Ascending aorta (tissue), 2 donors: ENCODE measurements at regions of chr2 and their contacts with region 1.

Region 1: DNA sequence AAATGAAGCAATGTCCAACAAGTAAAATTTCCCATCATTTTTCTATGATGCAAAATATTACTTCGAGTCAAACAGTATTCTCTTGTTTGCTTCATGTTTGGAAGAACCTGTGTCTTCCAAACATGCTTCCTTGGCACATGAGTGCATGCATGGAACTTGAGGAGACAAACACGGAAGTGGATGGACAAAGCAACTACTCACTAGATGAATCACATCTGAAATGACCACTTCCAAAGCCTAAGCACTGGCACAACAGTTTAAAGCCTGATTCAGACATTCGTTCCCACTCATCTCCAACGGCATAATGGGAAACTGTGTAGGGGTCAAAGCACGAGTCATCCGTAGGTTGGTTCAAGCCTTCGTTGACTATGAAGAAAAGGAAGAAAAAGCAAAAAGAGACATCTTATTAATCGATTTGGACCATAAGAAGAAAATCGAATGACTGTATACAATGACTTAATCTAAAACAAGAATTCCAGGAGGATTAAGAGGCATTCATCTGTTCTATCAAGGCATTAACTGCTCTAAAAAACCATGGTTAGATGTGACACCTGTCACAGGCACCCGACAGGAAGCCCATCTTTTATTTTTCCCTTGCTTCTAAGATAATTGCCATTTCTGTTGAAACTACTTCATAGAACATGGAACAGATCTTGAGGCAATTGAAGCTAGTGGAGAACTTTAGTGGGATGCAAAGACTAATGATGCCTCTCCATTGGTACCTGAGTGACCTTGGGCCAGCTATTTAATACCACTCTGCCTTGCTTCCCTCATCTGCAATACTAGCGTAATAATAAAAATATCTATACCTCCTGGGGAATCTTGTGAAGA is 56.0 kb downstream of the ATIC start:
- DNase-seq: no peak
- H3K4me3 ChIP-seq: no peak overlapping the region
- H3K27ac ChIP-seq: no peak overlapping the region
- H3K4me1 ChIP-seq: no peaks in the 10 kb centered on the region
- H3K27me3 ChIP-seq: no peaks in the 10 kb centered on the region
- CTCF ChIP-seq: no peak

Region 2: GRCh38 chr2:214987261-214987660 is 380.6 kb before region 1 on chr2:
- intact Hi-C with region 1: no loop called
- DNase-seq: no peak
- H3K4me3 ChIP-seq: no peak overlapping the region
- H3K27ac ChIP-seq: no peak overlapping the region
- H3K4me1 ChIP-seq: no peaks in the 10 kb centered on the region
- H3K27me3 ChIP-seq: no peaks in the 10 kb centered on the region
- CTCF ChIP-seq: no peak

Region 3: GRCh38 chr2:215120401-215120800 is 247.5 kb before region 1 on chr2:
- intact Hi-C with region 1: no loop called
- DNase-seq: no peak
- H3K4me3 ChIP-seq: no peak overlapping the region
- H3K27ac ChIP-seq: no peak overlapping the region
- H3K4me1 ChIP-seq: no peaks in the 10 kb centered on the region
- H3K27me3 ChIP-seq: no peaks in the 10 kb centered on the region
- CTCF ChIP-seq: no peak

Region 4: GRCh38 chr2:215423234-215423633 is 55.4 kb after region 1 on chr2:
- intact Hi-C with region 1: loop called (anchors 5 kb)
- DNase-seq: no peak
- H3K4me3 ChIP-seq: no peak overlapping the region
- H3K27ac ChIP-seq: peak overlapping the region in 1 of 2 donors; percentile 71
- H3K4me1 ChIP-seq: peaks cover 13 to 17% of the 10 kb centered on the region in 2 donors
- H3K27me3 ChIP-seq: no peaks in the 10 kb centered on the region
- CTCF ChIP-seq: no peak

Region 5: DNA sequence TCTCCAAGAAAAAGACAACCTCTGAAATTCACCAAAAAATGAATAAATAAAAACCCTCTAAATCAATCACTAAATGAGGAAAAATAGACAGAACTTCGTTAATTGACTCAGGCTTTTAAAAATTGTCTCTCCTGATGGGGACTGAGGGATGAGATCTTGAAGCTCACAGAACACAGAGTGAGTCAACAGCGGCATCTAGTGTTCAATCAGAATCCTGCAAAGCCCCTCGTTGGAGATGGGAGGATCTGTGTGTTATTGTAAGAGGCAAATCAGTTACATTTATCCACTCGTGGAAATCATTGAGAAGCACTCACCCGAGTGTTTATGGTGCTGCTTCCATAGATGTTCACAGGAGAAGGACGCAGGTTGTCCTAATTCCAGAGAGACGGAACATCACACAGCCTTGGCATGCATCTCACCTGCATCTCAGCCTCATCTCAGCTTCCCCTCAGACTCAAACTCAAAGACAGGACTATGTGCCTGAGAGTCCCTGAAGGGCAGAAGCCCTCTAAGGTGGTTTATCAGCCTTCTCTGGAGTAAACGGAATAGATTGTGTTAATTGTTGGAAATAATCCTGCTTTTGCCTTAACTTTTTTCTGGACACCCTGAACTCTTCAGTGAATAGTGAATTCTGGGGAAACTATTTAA is 563.5 kb after region 1 on chr2:
- intact Hi-C with region 1: loop called (anchors 5 kb)
- DNase-seq: peak in 1 of 2 donors; percentile 81
- H3K4me3 ChIP-seq: peak overlapping the region; percentile 31 to 48
- H3K27ac ChIP-seq: no peak overlapping the region
- H3K4me1 ChIP-seq: no peaks in the 10 kb centered on the region
- H3K27me3 ChIP-seq: no peaks in the 10 kb centered on the region
- CTCF ChIP-seq: peak; percentile 79 to 97 (median 94)